ENCODE measurements at regions of chr18 and their contacts with region 1.

Region 1: DNA sequence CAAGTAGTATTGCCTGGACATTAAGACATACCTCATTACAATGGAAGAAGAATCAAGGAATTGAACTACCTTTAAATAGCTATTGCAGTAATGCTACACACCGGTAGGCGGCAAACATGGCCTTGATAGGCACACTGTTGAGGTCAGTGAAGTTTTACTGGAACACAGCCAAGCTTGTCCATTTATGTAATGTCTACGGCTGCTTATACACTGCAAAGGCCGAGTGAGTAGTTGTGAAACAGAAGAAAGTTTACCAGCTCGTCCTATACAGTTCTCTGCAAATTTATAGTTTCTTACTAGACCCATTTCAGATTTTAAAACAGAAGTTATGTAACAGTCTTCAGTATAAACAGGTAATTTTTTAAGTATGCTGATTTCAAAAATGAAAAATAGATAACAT is 38.8 kb downstream of the PPP4R1 start:
- DNase-seq: peak; percentile 98
- ATAC-seq: peak; percentile 97
- H3K4me3 ChIP-seq: no peak overlapping the region
- H3K27ac ChIP-seq: no peak overlapping the region
- H3K4me1 ChIP-seq: peaks cover 4% of the 10 kb centered on the region; the same call in 1 of the 2 replicates
- H3K27me3 ChIP-seq: no peaks in the 10 kb centered on the region
- CTCF ChIP-seq: peak; percentile 92
- POLR2A ChIP-seq: no peak
- RAD21 ChIP-seq: peak; percentile 90

Region 2: DNA sequence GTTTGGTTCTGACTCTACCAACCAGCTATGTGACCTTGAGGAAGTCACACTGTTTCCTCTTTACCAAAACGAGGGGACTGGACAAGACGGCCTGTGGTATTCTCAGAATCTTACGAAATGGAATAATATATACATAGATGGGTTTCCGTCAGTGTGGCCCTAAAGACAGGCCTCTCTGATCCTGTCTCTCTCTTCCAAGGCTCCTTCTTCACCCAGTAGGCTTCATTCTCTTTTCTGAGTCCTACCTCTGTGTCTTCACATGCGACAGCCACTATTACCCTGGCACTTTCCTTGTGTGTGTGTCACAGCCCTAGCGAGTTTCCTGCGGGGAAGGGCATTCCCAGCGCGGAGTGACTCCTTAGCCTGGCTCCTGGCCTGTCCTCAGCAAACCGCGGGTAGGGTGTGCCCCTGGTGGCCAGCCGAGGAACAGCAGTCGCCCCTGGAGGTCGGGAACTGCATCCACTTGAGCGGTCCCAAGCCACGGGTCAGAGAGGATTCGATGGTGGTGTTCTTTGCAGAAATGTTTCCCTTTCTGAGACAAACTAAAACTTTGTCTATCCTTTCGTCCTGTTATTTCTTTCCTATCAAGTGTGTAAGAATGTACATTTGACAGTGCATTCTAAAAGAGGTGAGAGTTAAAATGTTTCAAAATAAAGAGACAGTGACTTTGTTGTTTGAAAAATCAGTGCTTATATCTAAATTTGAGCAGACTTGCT is 195.9 kb after region 1 on chr18:
- CTCF ChIA-PET with region 1: no interaction called
- POLR2A ChIA-PET with region 1: no interaction called
- dilution Hi-C with region 1: no loop called
- in situ Hi-C with region 1: no loop called
- intact Hi-C with region 1: loop called (anchors 5 kb)
- DNase-seq: peak; percentile 57
- ATAC-seq: peak; percentile 96
- H3K4me3 ChIP-seq: no peak overlapping the region
- H3K27ac ChIP-seq: no peak overlapping the region
- H3K4me1 ChIP-seq: no peaks in the 10 kb centered on the region
- H3K27me3 ChIP-seq: no peaks in the 10 kb centered on the region
- CTCF ChIP-seq: peak; percentile 75
- POLR2A ChIP-seq: no peak
- RAD21 ChIP-seq: peak; percentile 86

Region 3: DNA sequence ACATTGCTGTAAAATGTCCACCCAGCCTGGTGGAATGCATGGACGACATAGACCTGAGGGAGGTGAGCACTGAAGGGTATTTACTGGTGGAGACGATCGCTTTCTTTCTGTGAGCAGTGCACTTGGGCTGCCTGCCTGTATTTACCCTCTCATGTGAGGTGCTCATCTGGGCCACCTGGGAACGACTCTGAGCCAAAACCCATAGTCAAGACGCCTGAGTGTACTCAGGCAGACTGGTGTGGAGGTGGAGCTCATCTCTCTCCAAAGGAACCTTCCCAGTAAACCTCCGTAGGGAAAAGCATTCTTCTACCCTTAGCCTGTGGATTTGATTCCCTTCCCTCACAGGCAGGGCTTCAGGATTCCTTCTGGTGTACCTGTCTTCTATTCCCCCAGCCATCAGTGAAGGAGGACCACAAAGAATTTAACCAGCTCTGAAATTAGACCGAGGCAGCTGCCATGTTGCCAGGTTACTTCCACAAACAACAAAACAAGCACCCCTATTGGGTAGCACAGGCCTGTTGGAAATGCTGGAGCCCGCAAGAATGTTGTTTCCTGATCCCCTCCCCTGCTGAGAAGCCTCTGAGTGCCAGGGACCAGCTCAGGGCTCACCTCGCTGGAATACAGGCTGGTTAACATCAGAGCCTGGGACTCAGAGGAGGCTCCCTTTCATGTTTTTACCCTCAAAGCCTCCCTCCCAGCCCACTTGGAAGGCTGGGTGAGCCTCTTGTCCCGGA is 262.8 kb after region 1 on chr18:
- CTCF ChIA-PET with region 1: no interaction called
- POLR2A ChIA-PET with region 1: no interaction called
- dilution Hi-C with region 1: no loop called
- in situ Hi-C with region 1: no loop called
- intact Hi-C with region 1: no loop called
- DNase-seq: no peak
- ATAC-seq: no peak
- H3K4me3 ChIP-seq: no peak overlapping the region
- H3K27ac ChIP-seq: no peak overlapping the region
- H3K4me1 ChIP-seq: no peaks in the 10 kb centered on the region
- H3K27me3 ChIP-seq: no peaks in the 10 kb centered on the region
- CTCF ChIP-seq: no peak
- POLR2A ChIP-seq: no peak
- RAD21 ChIP-seq: no peak

Region 4: GRCh38 chr18:9913526-9914333 is 338.2 kb after region 1 on chr18 and contains the start of gene VAPA:
- CTCF ChIA-PET with region 1: interaction called, 3 read pairs
- POLR2A ChIA-PET with region 1: no interaction called
- dilution Hi-C with region 1: no loop called
- in situ Hi-C with region 1: no loop called
- intact Hi-C with region 1: loop called (anchors 10 kb)
- DNase-seq: peak; percentile 96
- ATAC-seq: peak; percentile 92
- H3K4me3 ChIP-seq: peak within 1 kb of the TSS; percentile 87
- H3K27ac ChIP-seq: peak within 1 kb of the TSS; percentile 96
- H3K4me1 ChIP-seq: peaks cover under 1% of the 10 kb centered on the region; the same call in 1 of the 2 replicates
- H3K27me3 ChIP-seq: no peaks in the 10 kb centered on the region
- CTCF ChIP-seq: no peak
- POLR2A ChIP-seq: peak; percentile 92
- RAD21 ChIP-seq: no peak
- total RNA-seq, gene VAPA: 206 and 273 TPM in 2 replicates

Region 5: GRCh38 chr18:9951022-9951859 is 375.7 kb after region 1 on chr18:
- CTCF ChIA-PET with region 1: no interaction called
- POLR2A ChIA-PET with region 1: no interaction called
- dilution Hi-C with region 1: no loop called
- in situ Hi-C with region 1: loop called (anchors 10 kb)
- intact Hi-C with region 1: loop called (anchors 10 kb)
- DNase-seq: peak; percentile 79
- ATAC-seq: peak; percentile 85
- H3K4me3 ChIP-seq: no peak overlapping the region
- H3K27ac ChIP-seq: no peak overlapping the region
- H3K4me1 ChIP-seq: peaks cover under 1% of the 10 kb centered on the region; the same call in 1 of the 2 replicates
- H3K27me3 ChIP-seq: no peaks in the 10 kb centered on the region
- CTCF ChIP-seq: peak; percentile 70
- POLR2A ChIP-seq: no peak
- RAD21 ChIP-seq: peak; percentile 76